ENCODE measurements at regions of chr5 and their contacts with region 1.

Region 1: DNA sequence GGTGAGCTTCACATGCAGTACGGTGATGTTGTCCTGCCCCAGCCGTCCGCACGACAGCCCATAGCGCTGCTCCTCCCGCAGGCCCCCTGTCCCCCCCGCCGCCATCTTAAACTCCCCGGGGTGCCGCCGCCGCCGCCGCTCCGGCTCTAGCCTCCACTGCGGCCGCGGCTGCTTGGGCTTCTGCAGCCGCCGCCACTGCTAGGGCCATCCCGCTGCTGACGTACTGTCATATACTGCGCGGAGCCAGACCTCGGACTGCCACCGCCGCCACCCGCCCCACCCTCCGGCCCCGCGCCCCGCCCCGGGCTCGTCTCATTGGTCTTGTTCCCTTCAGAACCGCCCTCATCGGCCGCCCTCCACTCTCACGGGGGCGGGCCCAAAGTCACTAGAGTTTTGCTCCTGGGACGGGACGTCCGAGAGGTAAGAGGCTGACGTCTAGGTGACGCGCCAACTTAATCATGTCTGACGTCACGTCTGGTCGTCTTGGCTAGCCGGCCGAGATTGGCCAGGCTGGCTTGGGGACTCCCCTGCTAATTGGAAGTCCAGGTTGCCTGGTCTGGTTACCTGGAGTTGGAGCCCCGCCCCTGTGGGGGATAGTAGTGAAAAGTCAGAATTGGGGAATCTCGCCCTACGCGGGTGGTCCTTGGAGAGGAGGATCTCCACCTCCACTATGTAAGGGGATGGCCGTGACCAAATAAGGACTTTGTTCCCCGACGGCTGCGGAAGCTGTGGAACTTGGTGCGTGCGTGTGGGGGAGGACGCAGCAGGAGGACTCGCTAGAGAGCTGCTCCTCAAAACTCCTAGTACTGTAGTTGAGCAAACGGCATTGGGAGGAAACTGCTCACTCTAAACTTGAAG is at the start of gene ELL2:
- DNase-seq: peak; percentile 89
- ATAC-seq: peak; percentile 78
- H3K4me3 ChIP-seq: peak within 1 kb of the TSS; percentile 86
- H3K27ac ChIP-seq: peak within 1 kb of the TSS; percentile 95
- H3K4me1 ChIP-seq: 0 out of 2 replicates have a peak, but pooled peaks cover 3% of the 10 kb centered on the region
- H3K27me3 ChIP-seq: no peaks in the 10 kb centered on the region
- CTCF ChIP-seq: no peak
- EP300 ChIP-seq: no peak
- POLR2A ChIP-seq: peak; percentile 79
- RAD21 ChIP-seq: no peak
- polyA plus RNA-seq, gene ELL2: 24.2 to 34.4 TPM

Region 2: GRCh38 chr5:95858661-95859326 is 103.1 kb before region 1 on chr5:
- CTCF ChIA-PET with region 1: interaction called, 20 read pairs
- POLR2A ChIA-PET with region 1: no interaction called
- RAD21 ChIA-PET with region 1: interaction called, 19 read pairs
- SMC1A ChIA-PET with region 1: interaction called, 22 read pairs
- in situ Hi-C with region 1: loop called (anchors 5 kb)
- intact Hi-C with region 1: loop called (anchors 1 kb)
- DNase-seq: peak; percentile 67
- ATAC-seq: peak; percentile 95
- H3K4me3 ChIP-seq: no peak overlapping the region; the same call in 1 of the 2 replicates
- H3K27ac ChIP-seq: no peak overlapping the region
- H3K4me1 ChIP-seq: peaks cover 21% of the 10 kb centered on the region
- H3K27me3 ChIP-seq: no peaks in the 10 kb centered on the region
- CTCF ChIP-seq: peak; percentile 96 to 99 (median 98)
- EP300 ChIP-seq: no peak
- POLR2A ChIP-seq: no peak
- RAD21 ChIP-seq: peak; percentile 99

Region 3: DNA sequence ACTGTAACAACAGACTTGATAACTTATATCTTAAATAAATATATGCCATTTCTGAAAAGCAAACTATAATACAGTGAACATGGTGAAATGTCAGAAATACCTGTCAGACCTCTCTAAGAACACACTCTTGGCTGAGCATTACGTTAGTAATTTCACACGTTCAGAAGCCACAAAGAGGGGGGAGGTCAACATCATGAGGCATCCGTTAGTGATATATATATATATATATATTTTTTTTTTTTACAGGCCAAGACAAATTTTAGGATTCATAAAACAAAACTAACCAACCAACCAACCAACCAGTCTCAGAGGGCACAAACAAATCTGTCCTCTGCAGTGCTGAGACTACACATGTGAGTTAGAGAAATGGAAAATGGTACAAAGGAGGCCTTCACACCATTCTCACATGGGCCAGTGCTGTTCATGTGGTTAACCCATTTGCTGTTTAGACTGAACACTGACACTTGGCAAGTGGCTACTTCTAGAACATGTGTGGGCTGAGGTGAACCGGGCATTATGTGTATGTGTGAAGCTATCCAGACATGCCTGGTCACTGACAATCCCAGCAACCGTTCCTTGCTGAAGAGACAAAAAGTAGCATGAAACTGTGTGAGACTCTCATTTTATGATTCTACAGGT is 54.7 kb before region 1 on chr5:
- CTCF ChIA-PET with region 1: interaction called, 6 read pairs
- POLR2A ChIA-PET with region 1: interaction called, 3 read pairs
- RAD21 ChIA-PET with region 1: interaction called, 9 read pairs
- SMC1A ChIA-PET with region 1: interaction called, 48 read pairs
- in situ Hi-C with region 1: no loop called
- intact Hi-C with region 1: no loop called
- DNase-seq: no peak
- ATAC-seq: peak; percentile 76
- H3K4me3 ChIP-seq: no peak overlapping the region
- H3K27ac ChIP-seq: peak overlapping the region; percentile 11; the same call in 1 of the 2 replicates
- H3K4me1 ChIP-seq: peaks cover 11% of the 10 kb centered on the region
- H3K27me3 ChIP-seq: no peaks in the 10 kb centered on the region
- CTCF ChIP-seq: no peak
- EP300 ChIP-seq: no peak
- POLR2A ChIP-seq: no peak
- RAD21 ChIP-seq: no peak

Region 4: GRCh38 chr5:95934207-95934804 is 27.5 kb before region 1 on chr5:
- CTCF ChIA-PET with region 1: interaction called, 15 read pairs
- POLR2A ChIA-PET with region 1: interaction called, 16 read pairs
- RAD21 ChIA-PET with region 1: interaction called, 23 read pairs
- SMC1A ChIA-PET with region 1: interaction called, 27 read pairs
- in situ Hi-C with region 1: no loop called
- intact Hi-C with region 1: no loop called
- DNase-seq: no peak
- ATAC-seq: peak; percentile 43
- H3K4me3 ChIP-seq: no peak overlapping the region
- H3K27ac ChIP-seq: no peak overlapping the region
- H3K4me1 ChIP-seq: peaks cover 34% of the 10 kb centered on the region
- H3K27me3 ChIP-seq: no peaks in the 10 kb centered on the region
- CTCF ChIP-seq: no peak
- EP300 ChIP-seq: no peak
- POLR2A ChIP-seq: no peak
- RAD21 ChIP-seq: no peak

Region 5: DNA sequence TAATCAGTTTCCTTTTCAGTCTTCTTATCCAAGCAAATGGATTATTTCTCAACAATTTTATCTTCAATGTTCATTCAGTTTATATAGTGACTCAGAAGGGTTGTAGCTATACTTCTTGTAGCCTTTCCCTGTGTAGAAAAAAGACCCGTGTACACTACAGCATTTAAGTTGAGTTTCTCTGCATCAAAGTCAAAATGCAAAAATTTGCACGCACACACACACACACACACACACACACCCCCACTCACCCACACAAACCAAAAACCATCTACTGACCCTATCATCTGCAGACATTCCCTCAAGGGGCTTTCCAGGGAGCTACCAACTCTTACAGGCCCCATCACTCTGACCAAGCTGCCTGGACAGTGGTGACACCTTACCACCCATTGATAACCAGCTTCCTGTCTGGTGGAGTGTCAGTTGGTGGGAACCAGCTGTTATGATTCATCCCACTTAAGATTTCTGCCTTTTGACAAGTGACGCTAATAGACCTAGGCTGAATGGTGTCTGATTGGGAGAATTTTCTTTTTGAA is 12.0 kb after region 1 on chr5:
- CTCF ChIA-PET with region 1: interaction called, 32 read pairs
- POLR2A ChIA-PET with region 1: interaction called, 13 read pairs
- RAD21 ChIA-PET with region 1: interaction called, 41 read pairs
- SMC1A ChIA-PET with region 1: interaction called, 55 read pairs
- in situ Hi-C with region 1: no loop called
- intact Hi-C with region 1: no loop called
- DNase-seq: peak; percentile 87
- ATAC-seq: peak; percentile 99
- H3K4me3 ChIP-seq: no peak overlapping the region
- H3K27ac ChIP-seq: no peak overlapping the region; the same call in 1 of the 2 replicates
- H3K4me1 ChIP-seq: peaks cover 10% of the 10 kb centered on the region
- H3K27me3 ChIP-seq: no peaks in the 10 kb centered on the region
- CTCF ChIP-seq: no peak
- EP300 ChIP-seq: peak; percentile 52 to 71; a peak in 3 of 4 replicates
- POLR2A ChIP-seq: no peak
- RAD21 ChIP-seq: no peak

Measured in GM12878 (cell line).